SK-N-SH (cell line): ENCODE measurements at regions of chr22 and their contacts with region 1.

Region 1: DNA sequence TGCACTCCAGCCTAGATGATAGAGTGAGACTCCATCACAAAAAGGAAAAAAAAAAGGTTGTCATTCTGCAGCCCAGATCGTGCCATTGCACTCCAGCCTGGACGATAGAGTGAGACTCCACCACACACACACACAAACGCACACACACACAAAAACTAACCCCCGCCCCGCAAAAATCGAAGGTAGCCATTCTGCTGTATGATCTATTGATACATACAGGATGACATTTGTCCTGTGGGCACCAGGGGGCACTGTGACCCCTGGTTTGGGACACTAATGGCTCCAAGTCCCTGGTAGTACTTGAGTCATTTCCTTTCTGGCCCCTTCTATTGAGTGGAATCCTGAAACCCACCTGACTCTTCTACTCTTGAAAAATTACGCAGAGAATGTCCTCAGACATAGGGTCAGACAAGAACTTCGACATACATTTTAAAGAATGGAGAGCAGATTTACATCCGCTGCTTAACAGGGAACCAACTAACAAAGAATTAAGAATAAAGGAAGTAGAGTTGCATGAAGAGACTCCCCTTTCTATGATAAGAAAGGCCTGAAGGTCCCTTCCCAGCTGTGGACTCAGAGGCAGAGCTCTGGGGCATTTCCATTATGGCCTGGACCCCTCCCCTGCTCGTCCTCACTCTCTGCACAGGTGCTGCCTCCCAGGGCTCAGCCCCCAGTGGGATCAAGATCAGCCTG is 35.0 kb upstream of the PRAME start:
- DNase-seq: peak; percentile 73
- H3K4me3 ChIP-seq: no peak overlapping the region
- H3K27ac ChIP-seq: no peak overlapping the region
- H3K4me1 ChIP-seq: no peaks in the 10 kb centered on the region; a peak in 1 of 4 replicates
- H3K27me3 ChIP-seq: no peaks in the 10 kb centered on the region; the same call in 1 of the 2 replicates
- CTCF ChIP-seq: peak; percentile 78
- EP300 ChIP-seq: no peak
- RAD21 ChIP-seq: peak; percentile 80

Region 2: GRCh38 chr22:22687638-22688500 is 93.8 kb after region 1 on chr22:
- CTCF ChIA-PET with region 1: interaction called, 17 read pairs
- POLR2A ChIA-PET with region 1: no interaction called
- DNase-seq: peak; percentile 60
- H3K4me3 ChIP-seq: no peak overlapping the region
- H3K27ac ChIP-seq: no peak overlapping the region
- H3K4me1 ChIP-seq: no peaks in the 10 kb centered on the region; a peak in 1 of 4 replicates
- H3K27me3 ChIP-seq: no peaks in the 10 kb centered on the region
- CTCF ChIP-seq: peak; percentile 75
- EP300 ChIP-seq: no peak
- RAD21 ChIP-seq: peak; percentile 79

Region 3: GRCh38 chr22:22702237-22703202 is 108.4 kb after region 1 on chr22:
- CTCF ChIA-PET with region 1: interaction called, 10 read pairs
- POLR2A ChIA-PET with region 1: no interaction called
- DNase-seq: no peak
- H3K4me3 ChIP-seq: no peak overlapping the region
- H3K27ac ChIP-seq: no peak overlapping the region
- H3K4me1 ChIP-seq: no peaks in the 10 kb centered on the region
- H3K27me3 ChIP-seq: no peaks in the 10 kb centered on the region
- CTCF ChIP-seq: no peak; the same call in 1 of the 2 replicates
- EP300 ChIP-seq: no peak
- RAD21 ChIP-seq: no peak